ENCODE measurements at regions of chr6 and their contacts with region 1.

Region 1: GRCh38 chr6:15429141-15430110 is 183.6 kb downstream of the JARID2 start:
- DNase-seq: no peak
- H3K4me3 ChIP-seq: no peak overlapping the region
- H3K27ac ChIP-seq: no peak overlapping the region
- H3K4me1 ChIP-seq: peaks cover 24 to 63% (median 30%) of the 10 kb centered on the region in 4 donors
- H3K27me3 ChIP-seq: no peaks in the 10 kb centered on the region
- CTCF ChIP-seq: no peak
- EP300 ChIP-seq: no peak
- POLR2A ChIP-seq: no peak

Region 2: GRCh38 chr6:15864038-15864707 is 434.7 kb after region 1 on chr6:
- in situ Hi-C with region 1: no loop called
- intact Hi-C with region 1: loop called (anchors 5 kb)
- DNase-seq: no peak
- H3K4me3 ChIP-seq: no peak overlapping the region
- H3K27ac ChIP-seq: no peak overlapping the region
- H3K4me1 ChIP-seq: no peaks in the 10 kb centered on the region
- H3K27me3 ChIP-seq: no peaks in the 10 kb centered on the region
- CTCF ChIP-seq: no peak
- EP300 ChIP-seq: no peak
- POLR2A ChIP-seq: no peak

Measured in transverse colon (tissue), 4 donors.